Left colon (tissue), 2 donors: ENCODE measurements at regions of chr3 and their contacts with region 1.

Region 1: DNA sequence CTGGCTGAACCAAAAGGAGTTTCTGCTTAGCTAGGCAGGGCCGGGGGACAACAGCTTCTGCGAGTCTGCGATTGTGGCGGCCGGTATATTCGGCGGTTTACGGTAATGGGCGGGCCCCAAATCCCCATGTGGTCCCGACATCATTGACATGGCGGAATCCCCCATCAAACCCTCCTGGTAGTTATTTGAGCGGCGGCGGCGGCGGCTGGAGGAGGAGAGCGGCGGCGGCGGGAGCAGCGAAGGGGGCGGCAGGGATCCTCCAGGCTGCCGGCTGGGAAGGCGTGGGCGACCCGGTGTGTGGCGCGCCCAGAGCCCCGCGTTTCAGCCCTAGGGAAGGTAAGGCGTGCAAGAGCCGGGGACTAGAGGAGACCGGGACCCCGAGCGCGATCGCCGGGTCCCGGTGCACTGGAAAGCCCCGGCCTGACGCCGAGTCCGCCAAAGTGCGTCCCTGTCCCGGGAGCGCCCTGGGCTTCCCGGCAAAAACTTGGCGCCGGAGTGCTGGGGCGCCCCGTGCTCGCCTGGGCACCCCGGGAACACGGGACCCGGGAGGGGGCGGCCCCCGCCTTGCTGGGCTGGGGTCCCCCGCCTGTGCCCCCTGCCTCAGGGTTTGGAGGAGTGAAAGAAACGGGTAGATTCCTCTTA is at the start of gene FNDC3B:
- DNase-seq: peak; percentile 95
- ATAC-seq: peak; percentile 83
- total RNA-seq, gene FNDC3B: 100 to 113 TPM

Region 2: GRCh38 chr3:172124271-172124670 is 84.7 kb after region 1 on chr3:
- intact Hi-C with region 1: loop called in 1 of 2 experiments (anchors 5 kb)
- DNase-seq: no peak
- ATAC-seq: no peak

Region 3: GRCh38 chr3:172341482-172342059 is 302.0 kb after region 1 on chr3:
- intact Hi-C with region 1: loop called in 1 of 2 experiments (anchors 5 kb)
- DNase-seq: no peak
- ATAC-seq: peak; percentile 72